H1 (cell line): ENCODE measurements at regions of chr18 and their contacts with region 1.

Region 1: DNA sequence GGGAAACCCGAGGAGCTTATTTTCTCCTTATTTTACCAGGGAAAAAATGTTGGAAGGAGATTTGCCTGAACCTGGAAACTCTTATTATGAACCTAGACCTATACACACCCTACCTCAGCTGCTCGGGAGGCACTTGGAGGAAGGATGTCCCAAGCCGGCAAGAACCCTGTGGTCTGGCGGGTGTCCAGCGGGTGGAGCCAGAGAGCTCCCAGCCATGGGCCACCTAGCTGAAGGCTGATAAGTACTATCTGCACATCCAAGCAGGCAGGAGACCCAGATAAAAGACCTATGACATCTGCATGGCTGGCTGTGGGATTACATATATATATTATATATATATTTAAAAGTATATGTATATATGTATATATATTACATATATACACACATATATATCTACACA is 1.1 kb upstream of the SLC14A1 start:
- DNase-seq: peak; percentile 56 to 95
- H3K4me3 ChIP-seq: no peak overlapping the region
- H3K27ac ChIP-seq: no peak overlapping the region
- H3K4me1 ChIP-seq: peaks cover 0 to 4% (median 0%) of the 10 kb centered on the region in 4 experiments; a peak in 1 of 7 replicates
- H3K27me3 ChIP-seq: no peaks in the 10 kb centered on the region
- CTCF ChIP-seq: peak; percentile 88 to 98 (median 91)
- EP300 ChIP-seq: no peak
- POLR2A ChIP-seq: no peak
- RAD21 ChIP-seq: peak; percentile 90 to 96

Region 2: GRCh38 chr18:45690975-45691815 is 31.7 kb before region 1 on chr18:
- CTCF ChIA-PET with region 1: interaction called, 11 read pairs
- POLR2A ChIA-PET with region 1: no interaction called
- DNase-seq: peak; percentile 46 to 90
- H3K4me3 ChIP-seq: no peak overlapping the region
- H3K27ac ChIP-seq: no peak overlapping the region
- H3K4me1 ChIP-seq: peaks cover 5 to 9% (median 7%) of the 10 kb centered on the region in 4 experiments
- H3K27me3 ChIP-seq: no peaks in the 10 kb centered on the region
- CTCF ChIP-seq: peak; percentile 81 to 96 (median 93)
- EP300 ChIP-seq: no peak
- POLR2A ChIP-seq: no peak
- RAD21 ChIP-seq: peak; percentile 98 to 99

Region 3: DNA sequence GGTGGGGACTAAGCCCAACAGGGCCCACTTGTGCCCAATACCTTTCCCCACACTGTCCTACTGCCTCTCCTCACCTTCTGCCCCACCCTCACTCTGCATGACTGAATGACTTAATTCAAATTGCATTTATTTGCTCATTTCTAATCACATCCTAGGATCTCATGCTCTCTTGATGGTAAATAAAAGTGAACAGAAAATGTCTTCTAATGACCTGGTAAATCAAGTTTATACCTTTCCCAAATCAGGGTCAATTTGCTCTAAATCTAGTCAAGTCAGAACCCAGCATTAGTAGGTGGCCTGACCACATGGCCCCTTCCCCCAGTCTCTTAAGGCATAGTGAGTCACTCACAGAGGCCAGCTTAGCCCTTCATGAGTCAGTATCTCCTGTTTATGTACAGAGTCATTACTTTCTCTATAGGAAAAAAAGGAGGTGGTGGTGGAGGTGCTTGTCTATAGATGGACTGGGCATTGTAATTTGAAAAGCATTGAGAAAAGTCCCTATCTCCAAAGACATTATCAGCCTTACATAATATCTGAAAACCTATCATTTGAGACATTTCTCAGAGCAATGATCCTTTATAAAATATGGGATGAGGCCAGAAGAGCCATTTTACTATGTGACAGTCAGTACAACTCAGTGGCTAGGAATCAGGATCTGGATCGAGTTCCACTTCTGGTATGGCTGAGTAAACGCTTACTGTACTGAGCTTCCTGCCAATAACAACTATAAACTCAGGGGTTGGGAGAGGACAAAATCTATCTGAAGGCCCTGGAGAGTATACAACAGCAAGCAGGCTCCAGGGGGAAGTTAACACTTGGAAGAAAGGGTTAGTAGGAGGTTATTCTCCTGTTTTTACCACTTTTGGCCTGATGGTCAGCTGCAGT is 80.0 kb after region 1 on chr18:
- CTCF ChIA-PET with region 1: interaction called, 44 read pairs
- POLR2A ChIA-PET with region 1: no interaction called
- DNase-seq: no peak
- H3K4me3 ChIP-seq: no peak overlapping the region
- H3K27ac ChIP-seq: no peak overlapping the region
- H3K4me1 ChIP-seq: peaks cover 0 to 8% (median 4%) of the 10 kb centered on the region in 4 experiments; a peak in 6 of 7 replicates
- H3K27me3 ChIP-seq: no peaks in the 10 kb centered on the region
- CTCF ChIP-seq: no peak
- EP300 ChIP-seq: no peak
- POLR2A ChIP-seq: no peak
- RAD21 ChIP-seq: no peak

Region 4: DNA sequence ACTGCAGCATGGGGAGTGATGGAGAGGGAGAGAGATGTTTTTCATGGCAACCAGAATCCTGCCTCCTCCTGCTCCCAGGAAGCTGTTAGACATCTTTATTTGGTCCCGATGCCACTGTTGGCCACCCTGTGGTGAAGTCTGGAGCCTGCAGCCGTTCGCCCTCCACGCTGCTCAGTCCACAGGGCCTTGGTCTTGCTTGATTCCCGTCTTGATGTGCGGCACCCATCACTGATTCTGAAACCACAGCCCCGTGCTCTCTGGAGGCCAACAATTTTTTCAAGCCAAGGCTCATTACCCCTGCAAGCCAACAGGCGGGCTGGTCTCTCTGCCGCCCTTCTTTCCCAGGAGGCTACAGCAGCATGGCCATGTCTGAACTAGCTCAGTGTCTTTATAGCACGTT is 127.1 kb after region 1 on chr18:
- CTCF ChIA-PET with region 1: interaction called, 29 read pairs
- POLR2A ChIA-PET with region 1: no interaction called
- DNase-seq: peak in 1 of 2 experiments; percentile 56
- H3K4me3 ChIP-seq: no peak overlapping the region
- H3K27ac ChIP-seq: no peak overlapping the region
- H3K4me1 ChIP-seq: no peaks in the 10 kb centered on the region
- H3K27me3 ChIP-seq: no peaks in the 10 kb centered on the region
- CTCF ChIP-seq: peak; percentile 61 to 76 (median 75)
- EP300 ChIP-seq: no peak
- POLR2A ChIP-seq: no peak
- RAD21 ChIP-seq: peak; percentile 63 to 67

Region 5: DNA sequence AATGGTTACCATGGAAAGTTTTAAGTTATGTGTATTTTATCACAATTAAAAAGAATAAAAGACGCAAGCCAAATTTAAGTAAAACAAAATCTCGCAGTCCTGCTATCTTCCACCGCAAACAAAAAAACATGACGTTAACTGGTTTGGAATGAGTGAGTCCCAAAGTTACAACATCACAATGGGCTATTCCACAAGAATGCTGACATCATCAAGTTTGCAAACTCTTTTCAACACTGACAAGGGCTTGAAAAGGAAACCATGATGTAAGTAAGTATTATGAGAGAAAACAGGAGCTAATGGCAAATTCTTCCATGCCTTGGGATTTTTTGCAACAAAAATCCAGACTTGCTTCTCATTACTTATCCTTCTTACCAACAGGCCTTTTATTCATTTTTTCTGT is 133.6 kb after region 1 on chr18:
- CTCF ChIA-PET with region 1: interaction called, 29 read pairs
- POLR2A ChIA-PET with region 1: no interaction called
- DNase-seq: no peak
- H3K4me3 ChIP-seq: no peak overlapping the region
- H3K27ac ChIP-seq: no peak overlapping the region
- H3K4me1 ChIP-seq: no peaks in the 10 kb centered on the region
- H3K27me3 ChIP-seq: no peaks in the 10 kb centered on the region
- CTCF ChIP-seq: no peak
- EP300 ChIP-seq: no peak
- POLR2A ChIP-seq: no peak
- RAD21 ChIP-seq: no peak

Region 6: DNA sequence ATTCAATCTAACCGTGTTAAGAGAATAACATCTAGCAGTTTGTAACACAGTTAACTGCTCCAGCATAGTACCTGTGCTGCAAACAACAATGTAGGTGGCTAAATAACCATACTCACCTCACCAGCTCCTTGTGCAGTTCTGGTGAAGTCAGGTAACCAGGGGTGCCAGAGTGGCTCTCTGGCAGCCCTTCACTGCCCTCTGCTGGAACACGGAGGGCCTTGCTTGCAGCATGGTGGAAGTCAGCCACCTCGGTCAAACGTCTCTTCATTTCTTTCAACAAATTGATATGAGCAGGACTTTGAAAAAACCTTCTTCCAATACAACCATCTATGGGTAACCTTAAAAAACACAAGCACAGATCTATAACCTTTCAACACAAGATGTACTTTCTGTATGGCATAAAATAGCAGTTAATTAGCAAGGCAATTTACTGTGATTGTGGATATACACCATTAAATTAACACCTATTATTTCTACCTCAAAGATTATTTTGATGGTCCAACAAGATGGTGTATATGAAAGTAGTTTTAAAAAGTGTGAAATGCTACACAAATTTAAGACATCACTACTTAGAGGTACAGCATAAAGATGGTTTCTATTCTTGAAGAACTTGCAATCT is 187.6 kb after region 1 on chr18:
- CTCF ChIA-PET with region 1: interaction called, 13 read pairs
- POLR2A ChIA-PET with region 1: no interaction called
- DNase-seq: peak; percentile 33 to 72
- H3K4me3 ChIP-seq: no peak overlapping the region
- H3K27ac ChIP-seq: no peak overlapping the region
- H3K4me1 ChIP-seq: no peaks in the 10 kb centered on the region
- H3K27me3 ChIP-seq: no peaks in the 10 kb centered on the region
- CTCF ChIP-seq: peak; percentile 89
- EP300 ChIP-seq: no peak
- POLR2A ChIP-seq: no peak
- RAD21 ChIP-seq: peak; percentile 90 to 91